GM10248 (cell line): ENCODE measurements at regions of chr1 and their contacts with region 1.

Region 1: GRCh38 chr1:203267347-203267846 is 37.9 kb upstream of the BTG2 start:
- DNase-seq: peak; percentile 80
- CTCF ChIP-seq: peak; percentile 94

Region 2: GRCh38 chr1:203038891-203039608 is 228.3 kb before region 1 on chr1:
- CTCF ChIA-PET with region 1: interaction called, 95 read pairs
- POLR2A ChIA-PET with region 1: no interaction called
- DNase-seq: peak; percentile 77
- CTCF ChIP-seq: peak; percentile 90

Region 3: GRCh38 chr1:203252678-203253077 is 14.7 kb before region 1 on chr1:
- CTCF ChIA-PET with region 1: interaction called, 24 read pairs
- POLR2A ChIA-PET with region 1: no interaction called
- DNase-seq: no peak
- CTCF ChIP-seq: no peak

Region 4: DNA sequence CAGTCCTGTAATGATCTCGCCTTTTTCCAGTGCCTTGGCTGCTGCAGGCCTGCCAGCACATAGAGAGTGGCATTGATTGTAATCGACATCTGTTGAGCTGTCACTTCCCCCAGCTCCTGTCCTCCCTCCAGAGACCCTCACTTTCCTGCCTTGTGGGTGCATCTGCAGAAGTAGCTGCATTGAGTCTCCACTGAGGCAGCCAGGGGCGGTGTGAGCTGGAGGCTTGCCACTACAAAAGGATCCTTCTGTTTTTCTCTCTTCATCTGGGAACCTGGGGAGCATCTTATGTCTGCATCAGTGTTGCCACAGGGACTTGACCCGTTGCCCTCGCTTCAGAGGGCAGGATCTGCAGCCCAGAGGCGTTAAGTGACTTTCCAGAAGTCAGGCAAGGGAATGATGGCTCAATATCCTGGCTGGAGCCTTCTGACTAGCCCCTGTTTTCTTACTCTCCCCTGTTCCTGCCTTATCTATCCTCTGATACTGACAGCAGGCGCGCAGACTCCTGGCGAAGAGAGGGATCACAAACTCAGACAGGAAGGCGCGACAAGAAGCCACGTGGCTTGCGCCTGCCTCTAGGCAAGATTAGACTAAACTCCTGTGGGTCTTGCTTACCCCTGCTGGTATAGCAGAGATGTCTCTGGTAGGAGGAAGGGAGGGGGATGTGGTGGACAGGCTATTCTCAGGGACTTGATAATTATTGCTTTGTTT is 96.9 kb after region 1 on chr1:
- CTCF ChIA-PET with region 1: interaction called, 12 read pairs
- POLR2A ChIA-PET with region 1: no interaction called
- DNase-seq: no peak
- CTCF ChIP-seq: no peak

Region 5: DNA sequence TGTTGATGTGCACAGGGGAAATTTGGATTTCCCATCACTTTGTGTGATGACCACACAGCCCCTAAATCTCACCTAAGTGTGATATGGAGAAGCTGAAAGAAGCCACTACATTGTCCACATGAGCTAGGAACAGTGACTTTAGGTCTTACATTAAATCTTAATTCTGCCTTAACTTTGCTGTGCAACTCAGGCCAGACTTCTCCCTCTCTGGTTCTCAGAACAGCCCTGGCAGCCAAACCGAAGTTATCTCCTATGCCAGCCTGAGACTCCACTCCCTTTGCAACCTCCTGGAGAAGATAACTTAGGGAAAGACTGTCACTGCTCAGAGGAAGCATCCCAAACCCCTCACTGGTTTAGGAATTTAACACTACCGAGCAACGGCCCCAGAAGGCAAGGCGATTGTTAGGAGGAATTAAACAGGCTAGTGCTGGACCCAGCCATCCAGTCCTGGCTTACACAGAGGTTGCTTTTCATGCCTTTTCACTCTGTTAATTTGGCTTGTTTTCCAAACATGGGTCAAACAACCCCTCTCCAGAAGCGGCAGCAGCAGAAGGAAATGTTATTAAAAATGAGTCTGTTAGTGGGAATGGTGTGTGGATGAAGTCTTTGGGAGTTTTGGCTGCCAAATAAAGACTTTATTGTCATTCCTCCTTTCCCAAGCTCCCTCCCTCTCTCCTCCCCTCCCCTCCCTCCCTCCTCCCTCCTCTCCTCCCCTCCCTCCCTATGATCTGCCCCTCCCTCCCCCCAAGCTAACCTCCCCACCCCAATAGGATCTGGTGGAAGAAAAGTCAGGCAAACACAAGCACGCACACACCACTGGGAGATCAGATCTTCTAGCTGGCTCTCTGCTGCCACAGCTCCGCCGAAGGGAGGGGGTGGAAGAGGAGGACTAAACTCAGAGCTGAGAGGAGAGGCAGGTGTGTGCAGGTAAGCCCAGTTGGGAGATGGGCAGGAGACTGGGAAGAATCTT is 207.9 kb after region 1 on chr1 and contains the start of gene PRELP:
- CTCF ChIA-PET with region 1: interaction called, 46 read pairs
- POLR2A ChIA-PET with region 1: no interaction called
- DNase-seq: no peak
- CTCF ChIP-seq: no peak

Region 6: GRCh38 chr1:203702130-203702577 is 434.8 kb after region 1 on chr1:
- CTCF ChIA-PET with region 1: interaction called, 12 read pairs
- POLR2A ChIA-PET with region 1: no interaction called
- DNase-seq: peak; percentile 56
- CTCF ChIP-seq: peak; percentile 77